ENCODE measurements at regions of chr3 and their contacts with region 1.

Region 1: DNA sequence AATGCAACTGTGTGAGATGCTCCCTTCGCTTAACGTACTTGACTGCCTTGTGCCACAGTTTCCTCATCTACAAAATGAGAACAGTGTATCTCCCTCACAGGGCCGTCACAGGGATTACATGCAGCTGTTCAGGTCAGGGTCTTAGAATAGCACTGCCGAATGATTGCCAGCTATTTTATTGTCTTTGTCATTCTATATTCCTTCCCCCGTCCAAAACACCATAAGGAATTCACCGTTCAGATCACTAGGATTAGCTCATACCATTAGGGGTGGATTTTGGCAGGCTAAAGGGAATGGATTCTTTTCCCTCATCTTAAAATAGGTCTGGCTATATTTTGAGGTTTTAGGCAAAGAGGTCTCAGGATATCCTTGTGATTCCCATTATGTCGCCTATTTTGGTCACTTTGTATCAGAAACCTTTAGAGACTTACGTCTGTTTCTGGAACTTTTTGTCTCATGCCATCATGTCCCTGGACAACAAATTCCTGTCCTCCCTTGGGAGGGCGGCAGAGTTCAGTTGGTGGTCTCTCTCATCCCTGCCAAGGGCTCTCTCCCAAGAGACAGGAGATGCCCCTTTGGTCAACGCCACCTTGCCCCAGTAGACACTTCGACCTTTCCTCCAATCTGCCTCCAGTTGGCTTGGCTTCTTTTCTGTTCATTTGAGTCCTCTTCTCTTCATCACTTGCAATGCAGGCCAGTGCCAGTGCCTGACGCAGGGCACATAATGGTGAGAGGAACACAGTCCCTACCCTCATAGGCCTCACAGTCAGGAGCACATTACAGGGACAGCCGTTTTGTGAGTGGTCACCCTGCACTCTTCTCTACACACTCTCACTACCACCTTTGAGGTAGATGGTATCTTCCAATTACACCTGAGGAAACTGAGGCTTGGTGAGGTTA is 171.6 kb upstream of the BHLHE40 start:
- DNase-seq: no peak
- H3K4me3 Mint-ChIP-seq: no peak overlapping the region
- H3K27ac Mint-ChIP-seq: no peak overlapping the region
- H3K4me1 Mint-ChIP-seq: peaks cover 28% of the 10 kb centered on the region
- H3K27me3 Mint-ChIP-seq: no peaks in the 10 kb centered on the region

Region 2: GRCh38 chr3:4387210-4388204 is 420.1 kb before region 1 on chr3:
- CTCF ChIA-PET with region 1: no interaction called
- intact Hi-C with region 1: loop called (anchors 5 kb)
- DNase-seq: no peak
- H3K4me3 Mint-ChIP-seq: no peak overlapping the region
- H3K27ac Mint-ChIP-seq: peak overlapping the region; percentile 39
- H3K4me1 Mint-ChIP-seq: peaks cover 26% of the 10 kb centered on the region
- H3K27me3 Mint-ChIP-seq: no peaks in the 10 kb centered on the region

Region 3: DNA sequence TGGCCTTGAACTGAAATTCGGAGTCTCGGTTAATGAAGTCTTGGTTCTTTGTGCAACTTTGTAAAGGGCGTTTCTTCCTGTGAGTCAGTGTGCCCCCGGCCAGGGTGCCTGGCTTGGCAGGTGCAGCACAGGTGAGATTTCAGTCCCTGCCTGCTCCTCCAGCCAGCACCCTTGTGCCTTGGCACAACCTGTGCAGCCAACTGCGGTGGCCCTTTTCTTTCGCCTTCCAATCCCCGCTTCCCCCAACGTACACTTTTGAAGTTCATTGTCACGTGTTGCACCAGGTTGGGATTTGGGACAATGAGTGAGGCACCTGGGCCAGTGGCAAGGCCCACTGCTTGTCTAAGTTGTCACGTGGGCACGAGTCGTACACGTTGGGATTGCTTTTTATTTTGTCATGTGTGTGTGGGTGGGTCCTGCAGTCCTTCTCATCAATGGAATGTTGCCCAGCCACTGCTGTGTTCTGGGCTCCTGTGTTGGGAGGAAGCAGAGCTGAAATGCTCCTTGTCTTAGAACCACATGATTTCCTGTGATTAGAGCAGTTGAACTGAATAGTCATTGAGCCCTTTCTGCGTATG is 71.3 kb before region 1 on chr3:
- CTCF ChIA-PET with region 1: interaction called, 4 read pairs
- intact Hi-C with region 1: loop called (anchors 5 kb)
- DNase-seq: no peak
- H3K4me3 Mint-ChIP-seq: no peak overlapping the region
- H3K27ac Mint-ChIP-seq: no peak overlapping the region
- H3K4me1 Mint-ChIP-seq: peaks cover 60% of the 10 kb centered on the region
- H3K27me3 Mint-ChIP-seq: no peaks in the 10 kb centered on the region

Region 4: DNA sequence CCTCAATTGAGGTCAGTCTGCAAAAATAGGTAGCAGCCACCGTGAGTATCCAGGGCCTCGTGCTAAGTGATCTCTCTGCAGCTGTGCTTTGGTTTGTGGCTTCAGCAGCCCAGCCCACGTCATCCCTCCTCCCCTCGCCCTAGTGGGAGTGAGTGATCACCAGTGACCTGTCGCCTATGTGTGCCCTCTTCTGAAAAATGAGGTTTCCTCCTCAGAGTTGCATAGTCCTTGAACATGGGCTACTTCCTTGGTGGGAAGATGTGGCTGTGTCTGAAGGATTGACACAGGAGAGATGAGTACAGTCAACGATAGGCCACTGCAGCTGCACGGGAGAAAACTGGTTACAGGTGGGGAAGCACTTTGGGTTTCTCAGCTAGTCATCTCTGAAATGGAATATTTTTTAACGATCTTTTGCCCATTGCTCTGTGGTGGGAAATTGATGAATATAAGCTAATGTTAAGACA is 26.8 kb after region 1 on chr3:
- CTCF ChIA-PET with region 1: interaction called, 4 read pairs
- intact Hi-C with region 1: loop called (anchors 1 kb)
- DNase-seq: peak; percentile 84
- H3K4me3 Mint-ChIP-seq: peak overlapping the region; percentile 13
- H3K27ac Mint-ChIP-seq: peak overlapping the region; percentile 93
- H3K4me1 Mint-ChIP-seq: peaks cover 85% of the 10 kb centered on the region
- H3K27me3 Mint-ChIP-seq: no peaks in the 10 kb centered on the region

Region 5: GRCh38 chr3:4888913-4889846 is 81.5 kb after region 1 on chr3:
- CTCF ChIA-PET with region 1: no interaction called
- intact Hi-C with region 1: loop called (anchors 1 kb)
- DNase-seq: peak; percentile 61
- H3K4me3 Mint-ChIP-seq: no peak overlapping the region
- H3K27ac Mint-ChIP-seq: peak overlapping the region; percentile 85
- H3K4me1 Mint-ChIP-seq: peaks cover 40% of the 10 kb centered on the region
- H3K27me3 Mint-ChIP-seq: no peaks in the 10 kb centered on the region

Region 6: GRCh38 chr3:5151586-5151985 is 344.0 kb after region 1 on chr3:
- CTCF ChIA-PET with region 1: no interaction called
- intact Hi-C with region 1: no loop called
- DNase-seq: no peak
- H3K4me3 Mint-ChIP-seq: no peak overlapping the region
- H3K27ac Mint-ChIP-seq: no peak overlapping the region
- H3K4me1 Mint-ChIP-seq: peaks cover 56% of the 10 kb centered on the region
- H3K27me3 Mint-ChIP-seq: no peaks in the 10 kb centered on the region